ENCODE measurements at regions of chr1 and their contacts with region 1.

Region 1: GRCh38 chr1:30412241-30413110 is 310.9 kb downstream of the MATN1 start:
- DNase-seq: no peak
- ATAC-seq: peak in 1 of 2 donors; percentile 70

Region 2: DNA sequence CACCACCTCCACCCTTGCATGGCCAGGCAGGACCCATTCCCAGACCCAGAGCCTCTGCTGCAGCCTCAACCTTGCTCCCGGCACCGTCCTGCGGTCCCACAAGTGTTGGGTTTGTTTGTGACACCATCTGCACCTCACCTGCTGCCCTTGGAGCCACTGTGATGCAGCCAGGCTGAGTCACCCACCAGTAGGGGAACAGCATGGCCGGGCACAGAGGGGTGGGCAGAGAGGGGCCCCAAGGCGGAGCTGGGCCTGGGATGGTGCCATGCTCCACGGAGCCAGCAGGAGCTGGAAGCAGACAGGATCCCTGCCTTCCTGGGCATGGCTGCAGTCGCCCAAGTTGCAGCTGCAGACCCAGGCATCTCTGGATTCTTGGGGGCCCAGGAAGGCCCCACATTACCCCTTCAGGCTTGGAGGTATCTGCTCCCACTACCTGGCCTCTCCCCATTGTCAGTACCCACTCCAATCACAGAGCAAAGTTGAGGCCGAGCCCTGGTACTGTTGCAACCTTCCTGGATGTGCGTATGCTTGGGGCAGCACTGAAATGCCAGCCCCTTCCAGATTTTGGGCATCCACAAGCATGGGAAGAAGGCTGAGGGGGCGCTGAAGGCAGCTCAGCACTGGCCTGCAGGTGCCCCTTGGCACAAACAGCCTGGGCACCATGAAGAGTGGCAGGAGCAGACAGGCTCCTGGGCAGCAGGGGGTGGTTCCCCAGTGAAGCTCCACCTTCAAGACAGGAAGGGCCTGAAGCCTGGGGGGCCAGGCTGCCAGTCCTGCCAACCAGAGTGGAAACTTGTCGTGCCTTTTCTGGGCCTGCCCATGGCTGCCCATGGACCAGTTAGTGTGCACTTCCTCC is 138.1 kb after region 1 on chr1:
- intact Hi-C with region 1: loop called in 1 of 2 experiments (anchors 10 kb)
- DNase-seq: no peak
- ATAC-seq: no peak

Region 3: DNA sequence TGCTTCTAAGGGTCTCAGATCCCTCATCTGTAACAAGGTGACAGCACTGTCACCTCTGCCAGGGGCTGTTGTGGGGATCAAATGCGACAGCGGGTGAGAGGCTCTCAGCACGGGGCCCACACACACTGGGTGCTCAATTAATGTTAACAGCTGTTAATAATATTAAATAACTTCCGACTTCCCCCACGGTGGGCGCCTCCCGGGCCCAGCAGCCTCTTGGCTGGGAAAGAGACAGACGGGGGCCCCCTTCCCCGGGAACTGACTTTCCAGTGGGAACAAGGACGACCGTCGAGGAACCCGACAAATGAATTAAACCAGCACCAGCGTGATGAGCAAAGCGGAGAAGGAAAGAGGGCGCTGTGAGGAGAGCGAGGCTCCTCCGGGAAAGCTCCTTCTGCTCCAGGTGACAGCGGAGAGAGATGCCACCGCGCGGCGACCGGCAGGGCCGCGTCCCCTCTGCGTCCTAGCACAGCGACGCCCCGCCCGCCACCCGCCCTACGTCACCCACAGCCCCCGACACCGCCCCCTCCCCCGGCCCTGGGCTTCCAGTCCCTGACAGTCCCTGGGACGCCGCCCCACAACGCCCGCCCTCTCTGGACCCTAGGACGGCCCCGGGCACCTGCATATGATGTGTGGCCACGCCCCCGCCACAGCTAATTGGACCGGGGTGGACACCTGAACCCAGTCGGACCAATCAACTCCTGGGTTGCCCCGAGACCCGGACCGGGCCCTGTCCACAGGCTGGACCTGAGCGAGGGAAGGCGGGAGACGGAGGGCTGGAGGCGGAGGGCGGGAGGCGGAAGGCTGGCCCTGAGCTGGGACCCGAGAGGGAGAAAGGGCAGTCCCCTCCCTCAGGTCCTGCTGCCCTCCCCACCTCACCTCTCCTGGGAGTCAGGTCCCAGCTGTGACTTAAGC is 272.7 kb after region 1 on chr1:
- intact Hi-C with region 1: loop called in 1 of 2 experiments (anchors 10 kb)
- DNase-seq: peak; percentile 66
- ATAC-seq: peak; percentile 79 to 83